Head of caudate nucleus (tissue), 42 donors: ENCODE measurements at regions of chr14 and their contacts with region 1.

Region 1: GRCh38 chr14:77616454-77617229 is at the start of gene SPTLC2:
- DNase-seq: peak; percentile 98 to 100 (median 100)

Region 2: DNA sequence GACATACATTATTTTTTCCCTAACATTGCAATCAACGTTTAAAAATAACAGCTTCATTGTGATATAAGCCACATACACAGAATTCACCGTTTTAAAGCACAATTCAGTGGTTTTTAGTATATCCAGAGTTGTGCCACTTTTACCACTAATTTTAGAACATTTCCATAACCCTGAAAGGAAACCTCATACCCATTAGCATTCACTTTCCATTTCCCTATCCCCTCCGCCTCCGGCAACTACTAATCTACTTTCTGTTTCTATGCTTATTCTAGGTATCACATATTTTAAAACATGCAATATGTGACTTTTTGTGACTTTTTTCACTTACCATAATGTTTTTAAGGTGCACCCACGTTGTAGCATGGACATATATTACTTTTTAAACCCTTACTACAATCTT is 62.4 kb before region 1 on chr14:
- intact Hi-C with region 1: loop called (anchors 5 kb)
- DNase-seq: peak in 1 of 42 donors; percentile 15

Region 3: GRCh38 chr14:77707724-77708408 is 91.2 kb after region 1 on chr14 and contains the starts of genes ALKBH1 and SLIRP:
- intact Hi-C with region 1: loop called (anchors 10 kb)
- DNase-seq: peak; percentile 81 to 97 (median 91)